AG04450 (cell line): ENCODE measurements at regions of chr6 and their contacts with region 1.

Region 1: GRCh38 chr6:17803409-17803808 is 96.7 kb upstream of the NUP153 start:
- DNase-seq: no peak
- H3K4me3 ChIP-seq: no peak overlapping the region
- H3K27ac ChIP-seq: no peak overlapping the region
- H3K27me3 ChIP-seq: no peaks in the 10 kb centered on the region
- CTCF ChIP-seq: no peak

Region 2: DNA sequence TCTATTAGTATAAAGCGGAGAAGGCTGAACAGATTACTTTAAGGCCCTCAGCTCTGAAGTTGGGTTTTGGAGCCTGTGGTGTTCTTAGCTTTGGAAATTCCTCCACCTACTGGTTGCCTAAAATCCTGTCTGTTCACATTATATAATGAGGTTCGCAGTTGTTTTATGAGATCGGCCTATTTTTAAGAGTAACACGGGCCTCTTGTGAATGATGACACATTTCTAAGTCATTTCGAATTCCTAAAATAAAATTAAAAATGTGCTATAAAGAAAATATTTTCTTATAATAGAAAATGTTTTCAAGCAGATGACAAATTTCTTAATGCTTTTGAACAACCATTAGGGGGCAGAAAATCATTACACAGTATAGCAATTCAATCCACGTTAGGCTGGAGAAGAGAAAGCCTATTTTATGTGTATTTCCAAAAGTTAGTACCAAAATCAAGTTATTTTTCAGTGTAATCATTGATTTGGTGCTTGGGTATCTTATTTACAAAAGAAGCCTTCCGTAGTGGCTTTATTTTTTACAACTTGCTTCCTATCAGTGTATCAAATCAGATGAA is 219.1 kb before region 1 on chr6:
- CTCF ChIA-PET with region 1: interaction called, 13 read pairs
- POLR2A ChIA-PET with region 1: no interaction called
- DNase-seq: peak; percentile 64
- H3K4me3 ChIP-seq: no peak overlapping the region
- H3K27ac ChIP-seq: no peak overlapping the region
- H3K27me3 ChIP-seq: no peaks in the 10 kb centered on the region
- CTCF ChIP-seq: peak; percentile 80

Region 3: GRCh38 chr6:17688481-17688880 is 114.9 kb before region 1 on chr6:
- CTCF ChIA-PET with region 1: interaction called, 12 read pairs
- POLR2A ChIA-PET with region 1: no interaction called
- DNase-seq: no peak
- H3K4me3 ChIP-seq: no peak overlapping the region
- H3K27ac ChIP-seq: no peak overlapping the region
- H3K27me3 ChIP-seq: no peaks in the 10 kb centered on the region
- CTCF ChIP-seq: no peak

Region 4: GRCh38 chr6:17813537-17813936 is 10.1 kb after region 1 on chr6:
- CTCF ChIA-PET with region 1: interaction called, 53 read pairs
- POLR2A ChIA-PET with region 1: no interaction called
- DNase-seq: no peak
- H3K4me3 ChIP-seq: no peak overlapping the region
- H3K27ac ChIP-seq: no peak overlapping the region
- H3K27me3 ChIP-seq: no peaks in the 10 kb centered on the region
- CTCF ChIP-seq: no peak

Region 5: DNA sequence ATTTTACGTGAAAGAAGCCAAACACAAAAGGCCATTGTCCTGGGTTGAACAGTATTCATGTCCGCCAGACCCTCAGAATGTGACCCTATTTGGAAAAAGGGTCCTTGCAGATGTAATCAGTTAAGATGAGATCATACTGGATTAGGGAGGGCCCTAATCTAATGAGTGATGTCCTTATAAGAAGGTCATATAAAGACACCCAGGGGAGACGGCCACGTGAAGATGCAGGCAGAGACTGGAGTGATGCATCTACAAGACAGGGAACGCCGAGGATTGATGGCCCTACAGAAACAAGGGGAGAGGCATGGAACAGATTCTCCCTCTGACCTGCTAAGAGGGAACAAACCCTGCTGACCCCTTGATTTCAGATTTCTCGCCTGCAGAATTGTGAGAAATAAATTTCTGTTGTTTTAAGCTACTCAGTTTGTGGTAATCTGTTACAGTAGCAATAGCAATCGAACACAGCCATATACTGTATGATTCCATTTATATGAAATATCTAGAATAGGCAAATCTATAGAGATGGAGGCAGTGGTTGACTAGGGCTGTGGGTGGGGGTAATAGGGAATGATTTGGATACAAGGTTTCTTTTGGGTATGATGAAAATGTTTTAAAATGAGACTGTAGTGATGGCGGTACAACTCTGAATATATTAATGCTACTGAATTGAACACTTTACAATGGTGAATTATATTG is 36.3 kb after region 1 on chr6:
- CTCF ChIA-PET with region 1: interaction called, 15 read pairs
- POLR2A ChIA-PET with region 1: interaction called, 3 read pairs
- DNase-seq: no peak
- H3K4me3 ChIP-seq: no peak overlapping the region
- H3K27ac ChIP-seq: no peak overlapping the region
- H3K27me3 ChIP-seq: no peaks in the 10 kb centered on the region
- CTCF ChIP-seq: no peak